ENCODE measurements at regions of chr3 and their contacts with region 1.

Region 1: DNA sequence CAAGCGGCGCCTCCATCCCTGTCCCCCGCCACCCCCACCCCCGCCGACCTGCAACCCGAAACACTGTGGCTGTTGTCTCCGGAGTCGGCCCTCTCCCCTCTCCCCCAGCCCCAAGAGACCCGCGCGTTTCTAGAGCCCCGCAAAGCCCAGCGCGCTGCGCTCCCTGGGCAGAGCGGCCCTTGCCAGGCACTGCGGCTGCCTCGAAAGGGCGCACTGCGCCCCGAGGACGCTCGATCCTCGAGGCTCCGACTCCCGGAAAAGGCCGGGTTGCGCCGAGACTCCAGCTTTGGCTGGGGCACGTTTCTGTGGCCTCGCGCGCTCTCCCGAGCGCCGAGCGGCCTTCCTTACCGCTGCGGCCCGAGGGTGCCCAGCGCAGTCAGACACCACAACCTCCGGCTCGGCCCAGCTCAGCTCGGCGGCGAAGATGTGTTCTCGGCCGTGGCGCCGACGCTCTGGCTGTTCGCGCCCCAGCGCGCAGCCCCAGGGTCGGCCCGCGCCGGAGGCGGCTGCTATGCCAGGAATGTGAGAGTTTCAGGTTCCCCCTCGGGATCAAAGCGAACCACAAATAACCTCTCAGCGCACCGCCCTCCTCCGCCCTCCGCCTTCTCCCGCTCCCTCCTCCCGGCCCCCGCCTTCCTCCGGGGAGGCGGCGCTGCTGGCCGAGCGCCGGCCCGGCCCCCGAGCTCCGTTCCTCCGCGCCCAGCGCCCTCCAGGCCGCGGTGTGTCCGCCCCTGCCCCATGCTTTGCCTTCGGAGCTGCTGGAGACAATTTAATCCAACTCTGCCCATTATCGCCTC is at the start of gene AMOTL2:
- DNase-seq: peak; percentile 95
- H3K4me3 ChIP-seq: peak within 1 kb of the TSS; percentile 64 to 78 (median 74)
- H3K27ac ChIP-seq: peak within 1 kb of the TSS; percentile 98 to 100 (median 100)
- H3K4me1 ChIP-seq: peaks cover 0 to 54% (median 50%) of the 10 kb centered on the region in 4 donors
- H3K27me3 ChIP-seq: no peaks in the 10 kb centered on the region
- CTCF ChIP-seq: no peak
- EP300 ChIP-seq: peak in 1 of 4 donors; percentile 52
- POLR2A ChIP-seq: peak; percentile 80 to 94
- total RNA-seq, gene AMOTL2: 43.5 to 112 (median 47.6) TPM

Region 2: GRCh38 chr3:134308350-134308891 is 65.8 kb before region 1 on chr3:
- intact Hi-C with region 1: loop called (anchors 1 kb)
- DNase-seq: peak; percentile 94
- H3K4me3 ChIP-seq: peak overlapping the region in 1 of 4 donors; percentile 9
- H3K27ac ChIP-seq: peak overlapping the region; percentile 76 to 95 (median 88)
- H3K4me1 ChIP-seq: peaks cover 0 to 48% (median 29%) of the 10 kb centered on the region in 4 donors
- H3K27me3 ChIP-seq: no peaks in the 10 kb centered on the region
- CTCF ChIP-seq: peak; percentile 98 to 100 (median 100)
- EP300 ChIP-seq: no peak
- POLR2A ChIP-seq: no peak

Region 3: DNA sequence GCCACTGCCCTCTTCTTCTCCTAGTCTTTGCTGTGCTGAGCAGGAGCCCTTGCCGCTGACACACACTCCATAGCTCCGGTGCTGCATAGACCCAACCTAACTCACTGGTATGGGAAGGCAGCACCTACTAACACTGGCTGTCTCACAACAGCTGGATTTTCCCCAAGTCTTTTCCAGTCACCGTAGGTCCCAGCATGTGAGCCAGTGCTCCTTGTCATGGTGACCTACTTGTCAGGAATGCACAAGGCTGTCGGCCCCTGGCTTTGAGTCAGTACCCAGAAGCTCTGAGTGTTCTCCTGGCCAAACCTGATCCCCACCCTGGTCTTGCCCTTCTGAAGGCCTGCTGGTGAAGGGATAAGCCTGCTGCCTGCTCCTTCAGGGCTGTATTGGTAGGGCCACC is 25.7 kb before region 1 on chr3:
- intact Hi-C with region 1: no loop called
- DNase-seq: peak; percentile 54
- H3K4me3 ChIP-seq: no peak overlapping the region
- H3K27ac ChIP-seq: peak overlapping the region in 1 of 4 donors; percentile 3
- H3K4me1 ChIP-seq: peaks cover 0 to 42% (median 29%) of the 10 kb centered on the region in 4 donors
- H3K27me3 ChIP-seq: no peaks in the 10 kb centered on the region
- CTCF ChIP-seq: no peak
- EP300 ChIP-seq: no peak
- POLR2A ChIP-seq: no peak

Region 4: GRCh38 chr3:134464064-134464697 is 90.0 kb after region 1 on chr3:
- intact Hi-C with region 1: loop called (anchors 2 kb)
- DNase-seq: peak; percentile 94
- H3K4me3 ChIP-seq: no peak overlapping the region
- H3K27ac ChIP-seq: peak overlapping the region; percentile 57 to 82 (median 71)
- H3K4me1 ChIP-seq: peaks cover 0 to 34% (median 23%) of the 10 kb centered on the region in 4 donors
- H3K27me3 ChIP-seq: no peaks in the 10 kb centered on the region
- CTCF ChIP-seq: no peak
- EP300 ChIP-seq: peak in 1 of 4 donors; percentile 36
- POLR2A ChIP-seq: no peak

Region 5: DNA sequence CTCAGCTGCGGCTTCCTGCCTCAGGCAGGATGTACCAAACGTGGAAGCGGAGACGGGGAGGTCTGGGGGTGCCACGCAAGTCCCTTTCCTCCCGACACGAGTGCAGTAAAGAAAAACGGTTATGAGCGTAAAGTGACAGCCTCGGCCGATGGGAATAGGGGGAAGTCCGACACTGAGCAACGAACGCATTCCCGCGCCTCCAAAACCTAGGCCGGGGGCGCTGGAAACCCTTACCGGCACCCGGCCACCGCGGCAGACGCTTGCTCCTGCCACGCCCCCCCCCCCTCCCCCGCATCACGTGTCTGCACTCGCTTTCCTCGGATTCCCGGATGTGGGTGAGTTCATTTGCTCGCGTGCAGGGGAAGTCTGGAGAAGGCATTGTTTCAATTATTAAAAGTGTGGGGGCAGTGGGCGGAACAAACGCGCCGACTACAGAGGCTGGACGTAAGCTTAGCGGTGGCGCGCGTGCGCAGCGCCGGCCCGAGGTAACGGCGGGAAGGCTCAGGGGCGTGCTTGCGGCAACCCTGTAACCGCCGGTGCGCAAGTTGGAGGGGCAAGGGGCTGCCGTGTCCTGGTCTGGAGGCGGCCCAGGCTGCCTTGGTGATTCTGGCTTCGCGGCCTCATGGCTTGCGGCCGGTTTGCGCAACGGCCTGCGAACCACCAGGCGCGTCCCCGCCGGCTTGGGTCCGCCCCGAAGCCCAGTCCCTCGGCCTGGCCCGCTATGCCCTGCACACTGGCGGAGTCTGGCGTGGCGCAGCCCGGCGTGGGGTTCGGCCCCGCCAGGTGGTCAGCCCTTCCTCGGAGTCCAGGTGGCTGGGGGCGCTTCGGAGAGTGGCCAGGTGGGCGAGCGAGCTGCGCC is 111.8 kb after region 1 on chr3 and contains the starts of genes ANAPC13 and CEP63:
- intact Hi-C with region 1: loop called (anchors 5 kb)
- DNase-seq: peak; percentile 98
- H3K4me3 ChIP-seq: peak within 1 kb of the TSS; percentile 59 to 81 (median 75)
- H3K27ac ChIP-seq: peak within 1 kb of the TSS; percentile 94 to 97 (median 96)
- H3K4me1 ChIP-seq: peaks cover 0 to 41% (median 32%) of the 10 kb centered on the region in 4 donors
- H3K27me3 ChIP-seq: no peaks in the 10 kb centered on the region
- CTCF ChIP-seq: no peak
- EP300 ChIP-seq: no peak
- POLR2A ChIP-seq: peak; percentile 35 to 62
- total RNA-seq, gene ANAPC13: 46.7 to 78.1 (median 61.1) TPM
- total RNA-seq, gene CEP63: 22.5 to 33.5 (median 25.6) TPM

Region 6: GRCh38 chr3:134600685-134601463 is 226.7 kb after region 1 on chr3:
- intact Hi-C with region 1: no loop called
- DNase-seq: no peak
- H3K4me3 ChIP-seq: no peak overlapping the region
- H3K27ac ChIP-seq: no peak overlapping the region
- H3K4me1 ChIP-seq: peaks cover 0 to 11% (median 8%) of the 10 kb centered on the region in 4 donors
- H3K27me3 ChIP-seq: no peaks in the 10 kb centered on the region
- CTCF ChIP-seq: peak; percentile 46 to 95 (median 80)
- EP300 ChIP-seq: no peak
- POLR2A ChIP-seq: no peak

Measured in sigmoid colon (tissue), 7 donors.